Astrocyte of the cerebellum (primary cell): ENCODE measurements at regions of chr22 and their contacts with region 1.

Region 1: DNA sequence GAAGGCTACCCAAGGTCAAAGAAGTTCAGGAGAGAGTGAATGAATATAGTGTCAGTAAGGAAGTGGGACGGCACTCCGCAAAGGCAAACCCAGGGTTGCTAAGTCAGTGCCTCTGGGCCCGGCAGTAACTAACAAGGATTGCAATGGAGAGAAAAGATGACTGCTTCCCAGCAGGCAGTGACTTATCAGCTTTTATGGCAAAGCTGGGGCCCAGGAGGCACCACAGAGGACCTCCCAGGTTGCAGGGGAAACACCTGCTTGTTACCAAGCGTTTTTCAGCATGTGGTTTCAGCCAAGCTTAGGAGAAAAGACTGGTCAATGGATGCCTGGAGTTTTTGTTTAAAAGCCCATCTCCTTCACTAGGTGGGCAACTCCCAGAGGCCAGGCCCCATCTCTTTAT is 11.3 kb downstream of the CACNG2 start:
- DNase-seq: no peak
- H3K4me3 ChIP-seq: no peak overlapping the region
- CTCF ChIP-seq: no peak

Region 2: GRCh38 chr22:36599771-36600170 is 92.5 kb before region 1 on chr22:
- in situ Hi-C with region 1: loop called (anchors 5 kb)
- DNase-seq: no peak
- H3K4me3 ChIP-seq: no peak overlapping the region
- CTCF ChIP-seq: no peak

Region 3: GRCh38 chr22:36644333-36644757 is 47.9 kb before region 1 on chr22:
- in situ Hi-C with region 1: loop called (anchors 5 kb)
- DNase-seq: peak; percentile 92
- H3K4me3 ChIP-seq: no peak overlapping the region
- CTCF ChIP-seq: no peak

Region 4: DNA sequence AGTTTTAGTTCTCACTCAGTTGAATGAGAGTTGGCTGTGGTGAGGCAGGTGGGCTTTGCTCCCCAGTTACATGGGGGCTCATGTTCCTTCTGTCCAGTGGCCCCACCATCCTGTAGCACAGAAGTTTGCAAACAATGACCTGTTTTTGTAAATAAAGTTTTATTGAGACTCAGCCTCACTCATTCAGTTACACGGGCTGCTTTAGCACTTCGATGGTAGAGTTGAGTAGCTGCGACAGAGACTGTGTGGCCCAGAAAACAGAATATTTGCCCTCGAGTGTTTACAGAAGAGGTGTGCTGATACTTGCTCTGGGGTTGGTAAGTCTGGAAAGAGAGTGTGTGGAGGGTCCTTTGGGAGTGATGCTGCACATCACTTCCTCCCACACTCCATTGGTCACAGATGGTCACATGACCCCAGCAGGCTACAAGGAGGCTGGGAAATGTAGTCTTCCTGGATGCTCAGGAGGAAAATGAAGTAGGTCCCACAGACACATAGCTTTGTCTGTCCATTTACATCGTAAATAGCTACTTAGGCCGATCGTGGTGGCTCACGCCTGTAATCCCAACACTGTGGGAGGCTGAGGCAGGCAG is 49.0 kb after region 1 on chr22:
- in situ Hi-C with region 1: no loop called
- DNase-seq: no peak
- H3K4me3 ChIP-seq: no peak overlapping the region
- CTCF ChIP-seq: no peak

Region 5: GRCh38 chr22:36753120-36753802 is 61.0 kb after region 1 on chr22:
- in situ Hi-C with region 1: no loop called
- DNase-seq: no peak
- H3K4me3 ChIP-seq: no peak overlapping the region
- CTCF ChIP-seq: no peak